GM13977 (cell line): ENCODE measurements at regions of chr20 and their contacts with region 1.

Region 1: DNA sequence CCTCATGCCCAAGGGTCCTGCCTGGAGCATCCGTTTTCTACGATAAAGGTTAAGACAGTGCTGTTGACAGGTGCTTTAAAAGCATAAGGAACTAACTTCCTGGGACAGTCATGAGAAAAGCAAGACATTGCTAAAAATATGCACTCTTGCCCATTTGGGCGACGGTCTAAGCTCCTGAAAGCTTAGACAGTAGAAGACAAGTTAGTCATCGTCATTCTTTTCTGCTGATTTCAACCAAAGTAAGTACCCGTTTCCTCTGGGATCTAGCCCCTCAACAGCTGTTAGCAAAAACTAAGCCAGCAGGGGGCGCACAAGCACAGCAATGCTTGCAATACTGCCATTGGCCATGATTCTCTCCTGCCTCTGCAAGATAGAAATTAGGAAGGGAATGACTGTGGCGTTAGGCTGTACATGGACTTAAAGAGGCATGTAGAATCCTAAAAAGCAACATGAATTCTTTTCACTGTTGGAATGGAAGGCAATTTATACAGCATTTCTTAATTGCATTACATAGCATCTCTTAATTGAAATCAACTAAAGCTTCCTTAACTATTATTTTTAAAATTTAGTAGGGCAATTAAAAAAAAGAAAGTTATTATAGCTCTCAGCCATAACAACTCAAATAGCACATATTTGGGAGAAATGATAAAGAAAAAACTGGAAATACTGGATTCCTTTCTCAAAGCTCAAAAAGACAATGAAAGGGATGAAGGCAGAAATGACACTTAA is 147.8 kb upstream of the RALGAPA2 start:
- DNase-seq: peak; percentile 75
- CTCF ChIP-seq: peak; percentile 94

Region 2: GRCh38 chr20:20229595-20229994 is 630.6 kb before region 1 on chr20:
- in situ Hi-C with region 1: no loop called
- DNase-seq: no peak
- CTCF ChIP-seq: no peak

Region 3: GRCh38 chr20:21235484-21236445 is 375.5 kb after region 1 on chr20:
- in situ Hi-C with region 1: loop called (anchors 25 kb)
- DNase-seq: peak; percentile 62
- CTCF ChIP-seq: peak; percentile 96